Cardiac septum (tissue), 1 donor: ENCODE measurements at regions of chr15 and their contacts with region 1.

Region 1: DNA sequence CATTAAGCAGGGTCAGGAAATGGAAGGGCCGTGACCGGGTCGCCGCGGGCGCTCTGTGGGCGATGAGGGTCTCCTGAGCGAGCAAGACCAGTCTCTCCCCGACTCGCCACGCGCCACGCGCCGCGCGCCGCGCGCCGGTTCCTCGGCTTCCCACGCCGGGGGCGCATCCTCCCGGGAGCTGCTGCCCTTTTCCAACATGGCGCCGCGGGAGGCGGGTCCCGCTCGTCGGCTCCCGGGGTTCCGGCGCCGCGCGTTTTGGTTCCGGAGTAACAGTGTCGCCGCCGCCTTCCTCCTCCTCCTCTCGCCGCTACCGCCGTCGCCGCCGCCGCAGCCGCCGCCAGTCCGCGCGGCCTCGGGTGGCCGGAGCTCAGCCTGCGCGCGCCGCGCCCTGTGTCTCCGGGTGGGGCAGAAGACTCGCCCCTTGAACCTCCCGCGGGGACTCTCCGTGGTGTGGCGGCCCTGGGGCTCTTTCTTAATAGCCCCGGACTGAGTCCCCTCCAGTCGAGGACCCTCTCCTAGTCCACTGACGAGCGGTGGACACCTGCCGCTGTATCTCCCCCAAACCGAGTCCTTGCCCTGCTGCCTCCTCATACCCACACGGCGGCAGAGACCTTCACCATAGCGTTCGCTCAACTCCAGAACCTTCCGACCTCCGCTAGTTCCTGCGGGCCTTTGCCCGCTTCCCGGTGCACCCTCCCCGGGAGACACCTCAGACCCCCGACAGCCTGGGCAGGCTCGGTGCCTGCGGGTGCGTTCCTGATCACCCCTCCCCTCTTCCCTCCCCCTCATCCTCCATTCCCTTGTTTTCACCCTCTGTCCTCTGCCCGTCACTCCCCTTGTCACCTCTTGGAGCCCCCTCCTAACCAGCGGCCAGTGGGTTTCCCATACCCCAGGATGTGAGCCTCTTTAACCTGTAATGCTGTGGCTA is at the start of gene MAP2K5:
- DNase-seq: peak; percentile 94
- total RNA-seq, gene MAP2K5: 28.2 TPM

Region 2: GRCh38 chr15:67456677-67457529 is 85.8 kb before region 1 on chr15:
- intact Hi-C with region 1: loop called (anchors 5 kb)
- DNase-seq: peak; percentile 89

Region 3: DNA sequence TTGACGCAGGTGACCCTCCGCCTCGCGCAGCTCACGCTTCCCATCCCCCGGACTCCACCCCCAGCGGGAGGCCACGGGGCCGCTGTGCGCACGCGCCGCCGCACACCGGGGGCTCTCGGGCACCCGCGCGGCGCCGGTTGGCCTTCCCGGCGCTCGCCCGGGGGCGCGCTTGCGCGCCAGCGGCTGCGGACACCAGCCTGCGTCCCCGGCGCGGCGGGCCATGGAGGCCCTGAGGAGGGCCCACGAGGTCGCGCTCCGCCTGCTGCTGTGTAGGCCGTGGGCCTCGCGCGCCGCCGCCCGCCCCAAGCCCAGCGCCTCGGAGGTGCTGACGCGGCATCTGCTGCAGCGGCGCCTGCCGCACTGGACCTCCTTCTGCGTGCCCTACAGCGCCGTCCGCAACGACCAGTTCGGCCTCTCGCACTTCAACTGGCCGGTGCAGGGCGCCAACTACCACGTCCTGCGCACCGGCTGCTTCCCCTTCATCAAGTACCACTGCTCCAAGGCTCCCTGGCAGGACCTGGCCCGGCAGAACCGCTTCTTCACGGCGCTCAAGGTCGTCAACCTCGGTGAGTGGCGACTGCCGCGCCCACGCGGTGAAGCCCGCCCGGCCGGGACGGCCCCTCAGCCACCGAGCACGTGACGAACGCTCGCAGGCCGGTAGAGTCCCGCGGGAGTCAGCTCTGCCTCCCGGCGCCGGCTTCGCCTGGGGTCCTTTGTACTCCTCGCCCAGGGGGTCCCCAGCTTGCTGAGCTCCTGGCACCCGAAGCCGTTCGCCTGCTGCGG is 21.5 kb before region 1 on chr15 and contains the start of gene C15orf61:
- intact Hi-C with region 1: loop called (anchors 2 kb)
- DNase-seq: peak; percentile 90
- total RNA-seq, gene C15orf61: 7.6 TPM